ENCODE measurements at regions of chr5 and their contacts with region 1.

Region 1: DNA sequence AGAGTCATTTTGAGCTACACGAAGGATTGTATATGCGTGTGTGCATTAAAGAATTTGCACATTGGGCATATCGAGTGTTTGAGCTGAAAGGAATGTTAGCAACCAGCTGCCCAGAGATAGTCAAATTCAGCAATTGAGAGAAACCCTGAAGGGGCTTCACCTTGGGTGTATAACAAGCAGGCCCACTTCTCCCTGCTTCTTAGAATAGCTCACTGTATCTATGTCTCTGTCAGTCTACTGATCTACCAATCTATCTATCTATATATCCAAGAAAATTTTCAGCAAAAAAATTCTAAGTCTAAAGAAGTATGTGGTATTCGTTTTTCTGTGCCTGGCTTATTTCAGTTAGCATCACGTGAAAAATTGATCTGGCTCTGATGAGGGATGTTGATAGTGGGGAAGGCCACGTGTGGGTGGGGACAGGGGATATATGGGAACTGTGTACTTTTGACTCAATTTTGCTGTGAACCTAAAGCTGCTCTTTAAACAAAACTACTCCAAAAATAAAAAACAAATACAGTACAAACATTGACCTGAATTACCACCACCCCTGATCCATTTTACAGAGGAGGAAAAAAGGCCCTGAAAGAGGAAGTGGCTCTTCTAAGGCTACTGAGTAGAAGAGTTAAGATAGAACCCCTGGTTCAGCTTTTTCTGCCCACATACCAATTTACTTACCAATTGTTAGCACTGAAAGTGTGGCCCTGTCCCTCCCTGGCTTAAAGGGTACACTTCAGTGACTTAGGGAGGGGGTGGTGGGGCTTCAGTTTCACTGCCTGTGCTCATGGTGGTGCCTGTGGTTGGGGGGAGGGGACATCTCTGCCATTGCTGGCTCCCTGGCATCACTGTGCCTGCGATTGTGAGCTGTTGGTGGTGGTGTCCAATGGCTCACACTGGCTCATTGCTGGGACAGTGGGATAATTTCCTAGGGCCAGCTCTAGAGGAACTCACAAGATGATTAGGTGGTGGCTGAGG is 141.8 kb downstream of the DOCK2 start:
- H3K4me3 Mint-ChIP-seq: no peak overlapping the region
- H3K27ac Mint-ChIP-seq: no peak overlapping the region
- H3K4me1 Mint-ChIP-seq: peaks cover 11% of the 10 kb centered on the region
- H3K27me3 Mint-ChIP-seq: no peaks in the 10 kb centered on the region

Region 2: DNA sequence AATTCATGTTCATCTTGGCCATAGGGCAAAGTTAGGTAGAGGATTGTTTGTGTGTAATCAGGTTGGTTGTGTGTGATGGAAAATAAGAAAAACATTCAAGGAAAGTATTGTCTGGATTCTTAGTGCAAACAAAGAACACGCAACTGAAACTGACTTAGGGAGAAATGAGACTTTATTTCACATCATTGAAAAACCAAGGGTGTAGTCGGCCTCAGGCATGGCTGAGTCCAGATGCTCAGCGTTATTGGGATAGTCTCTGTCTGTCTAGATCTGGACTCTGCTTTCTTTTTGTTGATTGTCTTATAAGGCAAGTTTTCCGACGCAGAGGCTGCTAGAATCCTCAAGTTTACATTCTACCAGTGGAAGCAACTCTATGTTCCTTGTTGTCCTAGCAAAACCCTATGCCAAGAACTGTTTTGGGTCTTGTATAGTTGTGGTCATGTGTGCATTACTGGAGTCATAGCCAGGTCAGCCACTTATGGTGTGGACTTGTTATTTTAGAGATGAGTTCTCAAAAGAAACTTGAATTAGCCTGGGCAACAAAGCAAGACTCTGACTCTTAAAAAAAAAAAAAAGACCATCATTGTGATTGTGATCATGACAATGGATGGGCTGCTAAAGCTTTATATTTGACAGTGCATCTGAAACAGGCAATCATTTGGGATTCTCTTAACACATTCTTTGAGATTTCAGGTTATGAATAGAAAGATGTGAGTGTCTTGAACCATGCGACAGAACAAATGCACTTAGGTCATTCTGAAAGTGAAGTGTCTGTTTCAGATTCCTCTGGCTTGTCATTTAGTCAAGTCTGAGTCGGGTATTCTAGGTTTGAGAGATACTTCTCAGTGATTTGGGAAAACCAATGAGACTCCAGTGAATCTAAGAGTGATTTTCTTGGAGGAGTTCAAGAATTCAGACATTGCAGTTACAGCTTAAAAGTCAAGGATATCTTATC is 59.3 kb before region 1 on chr5:
- intact Hi-C with region 1: loop called (anchors 2 kb)
- H3K4me3 Mint-ChIP-seq: no peak overlapping the region
- H3K27ac Mint-ChIP-seq: no peak overlapping the region
- H3K4me1 Mint-ChIP-seq: peaks cover 13% of the 10 kb centered on the region
- H3K27me3 Mint-ChIP-seq: no peaks in the 10 kb centered on the region

Measured in dendritic cell treated with granulocyte-macrophage colony-stimulating factor and Interleukin-4, amounts not matched to agents 40 ng/mL and 50 ng/mL, for 4 days (primary cell).